ENCODE measurements at regions of chr6 and their contacts with region 1.

Region 1: GRCh38 chr6:158793432-158793831 is 25.7 kb downstream of the EZR start:
- DNase-seq: peak; percentile 29 to 52 (median 45)
- H3K4me3 ChIP-seq: no peak overlapping the region
- H3K4me3 Mint-ChIP-seq: no peak overlapping the region
- H3K27ac ChIP-seq: no peak overlapping the region
- H3K27ac Mint-ChIP-seq: peak overlapping the region in 2 of 7 donors; percentile 23 to 46
- H3K4me1 ChIP-seq: no peaks in the 10 kb centered on the region
- H3K4me1 Mint-ChIP-seq: peaks cover 8% of the 10 kb centered on the region
- H3K27me3 ChIP-seq: no peaks in the 10 kb centered on the region
- H3K27me3 Mint-ChIP-seq: peaks cover 0 to 1% (median 0%) of the 10 kb centered on the region in 3 donors
- CTCF ChIP-seq: peak; percentile 55

Region 2: GRCh38 chr6:159125014-159125609 is 331.7 kb after region 1 on chr6:
- intact Hi-C with region 1: loop called in 1 of 2 experiments (anchors 10 kb)
- DNase-seq: no peak
- H3K4me3 ChIP-seq: no peak overlapping the region
- H3K4me3 Mint-ChIP-seq: no peak overlapping the region
- H3K27ac ChIP-seq: no peak overlapping the region
- H3K27ac Mint-ChIP-seq: no peak overlapping the region
- H3K4me1 ChIP-seq: peaks cover 47 to 52% of the 10 kb centered on the region in 2 donors
- H3K4me1 Mint-ChIP-seq: peaks cover 49% of the 10 kb centered on the region
- H3K27me3 ChIP-seq: no peaks in the 10 kb centered on the region
- H3K27me3 Mint-ChIP-seq: no peaks in the 10 kb centered on the region
- CTCF ChIP-seq: peak; percentile 37